Activated CD4-positive, alpha-beta T cell treated with anti-CD3 and anti-CD28 coated beads for 36 hours (primary cell): ENCODE measurements at regions of chr17 and their contacts with region 1.

Region 1: DNA sequence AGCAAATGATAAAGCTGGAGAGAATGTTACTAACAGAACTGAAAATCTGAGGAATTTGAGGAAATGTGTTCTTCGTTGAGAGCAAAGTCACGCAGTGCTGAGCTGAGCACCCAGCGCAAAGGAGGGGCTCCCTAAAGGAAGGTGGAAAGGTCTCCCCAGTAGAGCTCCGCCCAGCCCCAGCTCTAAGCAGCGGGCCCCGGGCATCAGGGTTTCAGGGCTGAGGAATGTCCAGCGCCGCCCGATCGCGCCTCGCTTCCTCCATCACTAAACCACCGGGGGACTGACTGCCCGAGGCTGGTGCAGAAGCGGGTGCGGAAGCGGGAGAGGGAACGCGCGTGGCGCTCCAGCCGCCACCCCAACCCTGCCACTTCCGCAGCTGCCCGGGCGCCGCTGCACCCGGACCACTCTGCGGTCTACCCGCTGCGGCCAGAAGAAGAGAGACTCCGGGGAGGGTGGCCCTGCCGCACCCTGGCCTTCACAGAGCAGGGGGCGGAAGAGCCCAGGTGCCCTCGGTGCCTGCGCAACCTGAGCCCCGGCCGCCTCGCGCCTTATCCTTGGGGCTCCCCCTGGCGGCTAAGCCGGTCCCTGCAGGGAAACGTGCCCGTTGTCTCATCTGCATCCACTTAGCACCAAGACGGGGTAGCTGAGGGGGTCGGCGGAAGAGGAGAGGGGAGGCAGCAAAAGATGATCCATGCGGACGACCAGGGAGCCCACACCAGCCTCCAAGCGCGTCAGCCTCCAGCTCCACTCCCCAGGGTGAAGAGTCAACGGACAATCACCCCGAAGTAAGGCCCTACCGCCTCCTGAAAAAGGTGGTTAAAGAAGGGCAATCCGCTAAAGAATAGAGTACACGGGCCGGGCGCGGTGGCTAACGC is 12.4 kb upstream of the GUCY2D start:
- DNase-seq: peak; percentile 96
- ATAC-seq: peak; percentile 93
- H3K4me3 Mint-ChIP-seq: peak overlapping the region; percentile 73
- H3K27ac Mint-ChIP-seq: peak overlapping the region; percentile 87
- H3K4me1 Mint-ChIP-seq: peaks cover 14% of the 10 kb centered on the region
- H3K27me3 Mint-ChIP-seq: peaks cover 5% of the 10 kb centered on the region

Region 2: GRCh38 chr17:7740481-7741001 is 249.5 kb before region 1 on chr17:
- CTCF ChIA-PET with region 1: interaction called, 9 read pairs
- POLR2A ChIA-PET with region 1: no interaction called
- intact Hi-C with region 1: loop called (anchors 1 to 5 kb)
- DNase-seq: no peak
- ATAC-seq: no peak
- H3K4me3 Mint-ChIP-seq: no peak overlapping the region
- H3K27ac Mint-ChIP-seq: no peak overlapping the region
- H3K4me1 Mint-ChIP-seq: no peaks in the 10 kb centered on the region
- H3K27me3 Mint-ChIP-seq: peaks cover 10% of the 10 kb centered on the region

Region 3: GRCh38 chr17:7794075-7794663 is 195.8 kb before region 1 on chr17:
- CTCF ChIA-PET with region 1: no interaction called
- POLR2A ChIA-PET with region 1: no interaction called
- intact Hi-C with region 1: no loop called
- DNase-seq: no peak
- ATAC-seq: no peak
- H3K4me3 Mint-ChIP-seq: no peak overlapping the region
- H3K27ac Mint-ChIP-seq: no peak overlapping the region
- H3K4me1 Mint-ChIP-seq: no peaks in the 10 kb centered on the region
- H3K27me3 Mint-ChIP-seq: no peaks in the 10 kb centered on the region

Region 4: DNA sequence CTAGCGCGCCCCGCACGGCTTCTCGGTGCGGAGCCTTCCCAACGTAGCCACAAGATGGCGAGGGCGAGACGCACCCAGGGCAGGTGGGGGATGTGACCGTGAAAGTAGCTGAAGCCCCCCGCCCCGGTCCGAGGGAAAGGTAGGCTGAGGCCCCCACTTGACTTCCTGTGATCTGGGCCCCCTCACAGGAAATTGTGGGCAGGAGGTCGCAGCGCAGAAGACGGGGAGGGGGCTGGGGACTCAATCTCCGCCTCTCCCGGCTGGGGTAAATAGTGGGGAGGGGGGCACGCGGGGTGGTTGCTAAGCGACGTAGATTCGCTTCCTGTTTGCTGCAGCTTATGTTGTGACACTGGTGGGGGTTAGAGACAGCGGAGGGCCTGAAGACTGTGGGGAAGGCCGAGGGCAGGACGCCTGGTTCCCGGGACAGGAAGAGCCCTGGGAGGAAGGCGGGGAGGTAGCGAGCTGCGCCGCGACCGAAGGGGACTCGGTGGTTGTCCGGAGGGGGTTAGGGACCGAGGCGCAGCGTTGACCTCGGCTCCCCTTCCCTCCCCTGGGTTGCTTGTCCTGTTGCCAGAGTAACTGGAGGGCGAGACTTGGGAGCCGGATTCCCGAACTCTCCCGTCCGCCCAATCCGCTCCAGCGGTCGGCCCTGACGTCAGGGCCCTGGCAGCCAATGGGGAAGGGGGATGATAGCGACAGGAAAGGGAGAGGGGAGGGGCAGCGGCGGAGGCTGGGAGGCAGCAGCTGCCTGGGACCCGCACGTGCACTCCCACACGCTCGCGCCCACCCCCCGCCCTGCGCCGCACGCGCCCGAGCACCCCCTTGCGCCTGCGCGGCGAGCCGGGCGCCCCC is 154.8 kb before region 1 on chr17:
- CTCF ChIA-PET with region 1: interaction called, 11 read pairs
- POLR2A ChIA-PET with region 1: no interaction called
- intact Hi-C with region 1: no loop called
- DNase-seq: peak; percentile 96
- ATAC-seq: peak; percentile 57
- H3K4me3 Mint-ChIP-seq: peak overlapping the region; percentile 93
- H3K27ac Mint-ChIP-seq: peak overlapping the region; percentile 91
- H3K4me1 Mint-ChIP-seq: peaks cover 42% of the 10 kb centered on the region
- H3K27me3 Mint-ChIP-seq: no peaks in the 10 kb centered on the region

Region 5: DNA sequence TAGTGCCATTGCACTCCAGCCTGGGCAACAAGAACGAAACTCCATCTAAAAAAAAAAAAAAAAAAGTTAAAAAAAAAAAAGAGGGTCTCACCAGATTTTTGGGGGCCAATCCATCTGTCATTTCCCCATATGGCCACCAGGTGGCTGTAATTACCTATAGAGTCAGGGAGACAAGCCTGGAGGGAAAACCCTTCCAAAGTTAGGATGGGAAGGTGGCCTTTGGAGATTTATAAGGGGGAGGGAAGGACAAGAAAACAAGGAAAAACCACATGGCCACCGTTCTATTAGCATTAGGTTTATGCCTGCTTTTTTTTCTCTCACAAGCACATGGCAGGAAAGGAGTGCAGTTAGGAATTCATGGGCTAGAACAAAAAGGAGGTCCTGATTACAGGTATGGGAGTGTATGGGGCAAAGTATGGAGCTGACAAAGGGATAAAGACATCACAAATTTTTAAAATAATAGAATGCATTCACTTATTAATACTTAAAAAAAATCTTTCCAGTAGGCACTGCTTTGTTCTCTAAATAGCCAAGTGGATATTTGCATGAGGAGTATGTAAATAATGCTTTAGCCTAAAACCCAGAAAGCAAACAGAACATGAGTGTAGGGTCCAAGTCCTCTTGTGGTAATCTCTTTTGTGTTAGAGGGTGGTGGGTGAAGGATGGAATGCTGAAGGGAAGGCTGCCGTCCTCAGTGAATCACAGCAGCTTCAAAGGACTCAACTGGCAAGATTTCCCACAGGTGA is 127.2 kb before region 1 on chr17:
- CTCF ChIA-PET with region 1: interaction called, 53 read pairs
- POLR2A ChIA-PET with region 1: no interaction called
- intact Hi-C with region 1: loop called (anchors 1 to 2 kb)
- DNase-seq: peak; percentile 58
- ATAC-seq: no peak
- H3K4me3 Mint-ChIP-seq: no peak overlapping the region
- H3K27ac Mint-ChIP-seq: no peak overlapping the region
- H3K4me1 Mint-ChIP-seq: peaks cover 13% of the 10 kb centered on the region
- H3K27me3 Mint-ChIP-seq: no peaks in the 10 kb centered on the region

Region 6: DNA sequence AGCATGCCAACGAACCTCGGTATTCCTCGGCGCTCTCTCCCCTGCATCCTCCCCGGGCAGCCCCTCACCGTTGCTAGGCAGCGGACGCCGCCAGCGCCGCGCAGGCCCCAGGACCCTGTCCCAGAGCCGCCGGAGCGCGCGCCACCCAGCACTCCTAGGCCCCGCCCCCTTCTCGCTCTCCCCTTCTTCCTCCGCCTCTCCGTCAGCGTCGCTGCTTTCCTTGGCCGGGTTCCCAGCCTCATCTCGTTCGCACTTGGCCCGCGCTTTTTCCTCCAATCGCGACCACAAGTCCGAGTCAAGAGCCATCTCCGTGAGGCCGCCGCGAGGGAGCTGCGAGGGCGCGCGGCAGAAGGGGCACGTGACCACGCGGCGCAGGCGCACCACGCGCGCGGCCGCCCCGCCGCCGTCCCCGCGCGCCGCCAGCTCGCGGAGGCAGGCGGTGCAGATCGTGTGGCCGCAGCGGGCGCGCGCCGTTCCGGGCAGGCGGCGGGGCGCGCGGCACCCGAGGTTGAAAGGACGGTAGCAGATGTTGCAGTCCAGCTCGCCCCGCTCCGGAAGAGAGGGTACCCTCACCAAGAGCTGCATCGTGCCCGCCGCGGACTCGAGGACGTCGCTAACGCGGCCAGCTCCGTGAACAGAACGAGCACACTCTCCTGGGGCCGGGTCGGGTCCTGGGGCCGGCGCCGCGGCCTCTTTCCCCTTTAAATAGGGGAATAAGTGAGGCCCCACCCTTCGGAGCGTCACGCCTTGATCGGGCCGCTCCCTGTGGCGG is 74.2 kb before region 1 on chr17 and contains the start of gene RNF227:
- CTCF ChIA-PET with region 1: interaction called, 61 read pairs
- POLR2A ChIA-PET with region 1: interaction called, 3 read pairs
- intact Hi-C with region 1: loop called (anchors 1 kb)
- DNase-seq: peak; percentile 95
- ATAC-seq: peak; percentile 88
- H3K4me3 Mint-ChIP-seq: peak within 1 kb of the TSS; percentile 86
- H3K27ac Mint-ChIP-seq: peak within 1 kb of the TSS; percentile 82
- H3K4me1 Mint-ChIP-seq: peaks cover 27% of the 10 kb centered on the region
- H3K27me3 Mint-ChIP-seq: no peaks in the 10 kb centered on the region
- total RNA-seq, gene RNF227: 3.8 to 5.6 TPM

Region 7: DNA sequence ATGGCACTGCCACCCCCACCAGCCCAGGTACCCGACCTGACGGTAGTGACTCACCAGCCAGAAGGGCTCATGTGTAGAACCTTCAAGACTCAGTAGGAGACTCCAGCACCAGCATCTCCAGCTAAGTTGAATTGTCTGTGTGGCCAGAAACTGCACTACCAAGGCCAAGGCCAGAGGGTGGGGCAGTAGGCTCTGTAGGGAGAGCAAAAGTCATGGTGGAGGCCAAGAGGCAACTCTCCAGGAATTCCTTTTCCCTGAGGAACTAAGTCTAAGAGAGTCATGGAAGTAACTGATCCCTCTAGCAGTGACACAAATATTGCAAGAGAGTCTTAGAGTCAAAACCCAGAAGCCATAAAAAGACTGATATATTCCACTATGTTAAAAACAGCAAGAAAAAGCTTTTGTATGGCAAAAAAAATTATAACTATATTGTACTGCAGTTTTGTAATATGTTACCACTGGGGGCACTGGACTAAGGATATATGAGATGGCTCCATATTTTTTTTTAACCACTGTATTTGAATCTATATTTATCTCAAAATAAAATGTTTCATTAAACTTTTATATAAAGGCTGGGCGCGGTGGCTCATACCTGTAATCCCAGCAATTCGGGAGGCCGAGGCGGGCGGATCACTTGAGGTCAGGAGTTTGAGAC is 17.8 kb before region 1 on chr17:
- CTCF ChIA-PET with region 1: interaction called, 12 read pairs
- POLR2A ChIA-PET with region 1: no interaction called
- intact Hi-C with region 1: no loop called
- DNase-seq: no peak
- ATAC-seq: no peak
- H3K4me3 Mint-ChIP-seq: no peak overlapping the region
- H3K27ac Mint-ChIP-seq: no peak overlapping the region
- H3K4me1 Mint-ChIP-seq: no peaks in the 10 kb centered on the region
- H3K27me3 Mint-ChIP-seq: peaks cover 5% of the 10 kb centered on the region